HCT116 (cell line): ENCODE measurements at regions of chr13 and their contacts with region 1.

Region 1: GRCh38 chr13:97344265-97345175 is 89.4 kb upstream of the RAP2A start:
- DNase-seq: peak; percentile 49
- ATAC-seq: peak; percentile 95
- H3K4me3 ChIP-seq: no peak overlapping the region
- H3K27ac ChIP-seq: peak overlapping the region; percentile 54; the same call in 1 of the 2 replicates
- H3K4me1 ChIP-seq: peaks cover 26 to 39% of the 10 kb centered on the region in 2 experiments
- H3K27me3 ChIP-seq: no peaks in the 10 kb centered on the region
- CTCF ChIP-seq: peak; percentile 72 to 79 (median 76)
- POLR2A ChIP-seq: no peak
- RAD21 ChIP-seq: peak; percentile 86

Region 2: GRCh38 chr13:97030705-97031452 is 313.6 kb before region 1 on chr13:
- CTCF ChIA-PET with region 1: no interaction called
- POLR2A ChIA-PET with region 1: no interaction called
- RAD21 ChIA-PET with region 1: no interaction called
- intact Hi-C with region 1: loop called (anchors 5 kb)
- DNase-seq: peak; percentile 46
- ATAC-seq: peak; percentile 85
- H3K4me3 ChIP-seq: no peak overlapping the region
- H3K27ac ChIP-seq: no peak overlapping the region
- H3K4me1 ChIP-seq: peaks cover 0 to 2% of the 10 kb centered on the region in 2 experiments; a peak in 1 of 4 replicates
- H3K27me3 ChIP-seq: no peaks in the 10 kb centered on the region
- CTCF ChIP-seq: peak; percentile 52 to 56 (median 56); a peak in 5 of 6 replicates
- POLR2A ChIP-seq: no peak
- RAD21 ChIP-seq: peak; percentile 69

Region 3: GRCh38 chr13:97212601-97213040 is 131.9 kb before region 1 on chr13:
- CTCF ChIA-PET with region 1: no interaction called
- POLR2A ChIA-PET with region 1: no interaction called
- RAD21 ChIA-PET with region 1: no interaction called
- intact Hi-C with region 1: loop called (anchors 2 kb)
- DNase-seq: no peak
- ATAC-seq: peak; percentile 95
- H3K4me3 ChIP-seq: no peak overlapping the region
- H3K27ac ChIP-seq: no peak overlapping the region
- H3K4me1 ChIP-seq: peaks cover 5 to 12% of the 10 kb centered on the region in 2 experiments; a peak in 2 of 4 replicates
- H3K27me3 ChIP-seq: no peaks in the 10 kb centered on the region
- CTCF ChIP-seq: peak; percentile 58 to 79 (median 76); a peak in 5 of 6 replicates
- POLR2A ChIP-seq: no peak
- RAD21 ChIP-seq: peak; percentile 76

Region 4: DNA sequence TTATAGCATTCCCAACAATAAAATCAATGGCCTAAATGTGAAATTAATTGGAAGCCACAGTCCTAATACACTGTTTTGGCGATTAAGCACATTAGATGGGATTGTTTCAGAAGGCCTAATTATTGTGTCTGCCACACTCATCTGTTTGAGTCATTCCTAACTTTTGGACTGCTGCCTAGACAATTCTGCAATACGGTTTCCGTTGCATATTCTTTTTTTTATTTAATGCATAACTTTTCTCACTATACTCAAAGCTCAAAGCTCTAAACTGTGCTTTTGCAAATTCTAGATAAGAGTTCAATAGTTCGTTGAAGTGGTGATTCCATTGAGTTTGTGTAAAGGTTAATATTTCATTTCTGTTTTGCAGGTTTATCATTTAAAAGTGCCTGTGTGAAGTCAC is 69.3 kb before region 1 on chr13:
- CTCF ChIA-PET with region 1: interaction called, 3 read pairs
- POLR2A ChIA-PET with region 1: no interaction called
- RAD21 ChIA-PET with region 1: no interaction called
- intact Hi-C with region 1: loop called (anchors 5 kb)
- DNase-seq: no peak
- ATAC-seq: peak; percentile 50
- H3K4me3 ChIP-seq: peak overlapping the region in 1 of 2 experiments; percentile 24; a peak in 1 of 4 replicates
- H3K27ac ChIP-seq: peak overlapping the region; percentile 100
- H3K4me1 ChIP-seq: peaks cover 89 to 95% of the 10 kb centered on the region in 2 experiments
- H3K27me3 ChIP-seq: no peaks in the 10 kb centered on the region
- CTCF ChIP-seq: no peak
- POLR2A ChIP-seq: no peak
- RAD21 ChIP-seq: no peak

Region 5: DNA sequence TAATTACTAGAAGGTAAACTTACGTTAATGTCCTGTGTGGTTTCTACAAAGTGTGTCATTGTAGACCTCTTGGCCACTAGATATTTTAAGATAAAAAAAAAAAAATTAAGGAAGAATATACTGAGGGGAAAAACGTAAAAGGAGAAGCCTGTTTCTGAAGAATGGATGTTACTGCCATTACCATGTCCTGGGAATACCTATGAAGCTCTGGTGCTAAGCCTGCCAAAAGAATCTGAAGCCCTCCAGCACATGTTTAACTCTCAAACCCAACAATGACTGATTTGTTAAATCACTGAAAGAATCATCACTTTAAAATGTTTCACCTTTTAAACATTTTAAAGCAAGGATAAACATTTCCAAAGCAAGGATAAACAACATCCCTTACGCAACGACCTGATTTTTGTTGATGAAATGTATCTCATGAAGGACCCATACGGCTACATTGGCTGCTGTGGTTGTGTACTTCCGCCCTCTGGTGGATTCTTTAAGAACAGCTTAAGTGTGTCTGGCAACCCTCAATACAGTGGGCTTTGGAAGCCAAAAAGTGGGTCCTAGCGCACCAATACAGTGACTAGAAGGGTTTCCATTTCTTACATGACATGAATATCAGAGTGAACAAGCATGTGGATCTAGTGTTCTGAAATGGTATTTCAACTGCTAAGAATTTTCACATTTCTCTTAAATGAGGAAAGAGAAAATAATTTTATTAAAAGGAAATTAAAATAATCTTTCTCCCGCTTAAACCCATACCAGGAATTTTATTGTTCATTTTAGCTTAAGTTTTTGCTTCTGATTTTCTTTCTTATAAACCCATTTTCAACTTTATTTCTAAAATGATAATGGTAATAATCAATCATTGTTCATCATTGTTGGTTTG is 14.9 kb after region 1 on chr13:
- CTCF ChIA-PET with region 1: interaction called, 11 read pairs
- POLR2A ChIA-PET with region 1: no interaction called
- RAD21 ChIA-PET with region 1: no interaction called
- intact Hi-C with region 1: no loop called
- DNase-seq: peak; percentile 44
- ATAC-seq: peak; percentile 94
- H3K4me3 ChIP-seq: no peak overlapping the region
- H3K27ac ChIP-seq: peak overlapping the region; percentile 28; the same call in 1 of the 2 replicates
- H3K4me1 ChIP-seq: no peaks in the 10 kb centered on the region
- H3K27me3 ChIP-seq: no peaks in the 10 kb centered on the region
- CTCF ChIP-seq: peak; percentile 71 to 94 (median 72); a peak in 5 of 6 replicates
- POLR2A ChIP-seq: no peak
- RAD21 ChIP-seq: peak; percentile 87